ENCODE measurements at regions of chr3 and their contacts with region 1.

Region 1: GRCh38 chr3:14431892-14432834 is 29.8 kb downstream of the SLC6A6 start:
- DNase-seq: peak; percentile 84 to 98 (median 94)
- ATAC-seq: peak; percentile 84
- H3K4me3 ChIP-seq: peak overlapping the region; percentile 31
- H3K4me3 Mint-ChIP-seq: peak overlapping the region; percentile 60
- H3K27ac ChIP-seq: peak overlapping the region; percentile 92 to 97
- H3K27ac Mint-ChIP-seq: peak overlapping the region; percentile 98
- H3K4me1 ChIP-seq: peaks cover 93% of the 10 kb centered on the region
- H3K4me1 Mint-ChIP-seq: peaks cover 92% of the 10 kb centered on the region
- H3K27me3 ChIP-seq: no peaks in the 10 kb centered on the region
- H3K27me3 Mint-ChIP-seq: no peaks in the 10 kb centered on the region
- CTCF ChIP-seq: no peak

Region 2: GRCh38 chr3:12484198-12484974 is 1947.8 kb before region 1 on chr3 and contains the start of gene TSEN2:
- CTCF ChIA-PET with region 1: no interaction called
- POLR2A ChIA-PET with region 1: no interaction called
- intact Hi-C with region 1: loop called in 1 of 2 experiments (anchors 10 kb)
- DNase-seq: peak; percentile 92 to 99 (median 96)
- ATAC-seq: peak; percentile 96
- H3K4me3 ChIP-seq: peak within 1 kb of the TSS; percentile 87
- H3K4me3 Mint-ChIP-seq: peak within 1 kb of the TSS; percentile 97
- H3K27ac ChIP-seq: peak within 1 kb of the TSS; percentile 72 to 81
- H3K27ac Mint-ChIP-seq: peak within 1 kb of the TSS; percentile 97
- H3K4me1 ChIP-seq: peaks cover 29% of the 10 kb centered on the region
- H3K4me1 Mint-ChIP-seq: peaks cover 52% of the 10 kb centered on the region
- H3K27me3 ChIP-seq: no peaks in the 10 kb centered on the region
- H3K27me3 Mint-ChIP-seq: no peaks in the 10 kb centered on the region
- CTCF ChIP-seq: no peak
- total RNA-seq, gene TSEN2: 8.0 to 8.2 TPM

Region 3: DNA sequence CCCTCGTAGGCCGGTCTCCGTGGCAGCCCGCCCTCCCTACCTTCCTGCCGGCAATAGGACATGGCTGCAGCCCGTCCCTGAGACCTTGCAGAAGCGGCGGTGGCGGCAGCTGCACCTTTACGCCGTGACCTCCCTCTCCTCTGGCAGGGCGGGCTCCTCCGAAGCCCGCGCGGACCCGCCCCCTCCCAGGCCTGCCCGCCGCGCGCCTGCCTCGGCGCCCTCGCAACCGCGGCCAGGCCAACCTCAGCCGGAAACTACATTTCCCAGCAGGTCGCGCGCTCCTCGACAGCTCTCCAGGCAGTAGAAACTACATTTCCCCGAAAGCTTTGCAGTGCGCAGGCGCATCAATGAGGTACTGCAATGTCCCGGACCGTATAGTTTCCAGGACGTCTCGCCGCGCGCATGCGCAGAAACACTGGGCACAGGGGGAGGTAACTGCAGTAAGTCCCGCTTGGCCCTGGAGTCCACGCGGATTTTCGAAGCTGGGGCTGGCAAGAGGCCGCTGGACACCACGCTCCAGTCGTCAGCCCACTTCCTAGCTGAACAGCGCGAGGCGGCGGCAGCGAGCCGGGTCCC is 307.5 kb before region 1 on chr3 and contains the starts of genes CHCHD4 and TMEM43:
- CTCF ChIA-PET with region 1: no interaction called
- POLR2A ChIA-PET with region 1: interaction called, 14 read pairs
- intact Hi-C with region 1: no loop called
- DNase-seq: peak; percentile 94 to 100 (median 98)
- ATAC-seq: peak; percentile 89
- H3K4me3 ChIP-seq: peak within 1 kb of the TSS; percentile 96
- H3K4me3 Mint-ChIP-seq: peak within 1 kb of the TSS; percentile 97
- H3K27ac ChIP-seq: peak within 1 kb of the TSS; percentile 76 to 86
- H3K27ac Mint-ChIP-seq: peak within 1 kb of the TSS; percentile 91
- H3K4me1 ChIP-seq: peaks cover 53% of the 10 kb centered on the region
- H3K4me1 Mint-ChIP-seq: peaks cover 73% of the 10 kb centered on the region
- H3K27me3 ChIP-seq: no peaks in the 10 kb centered on the region
- H3K27me3 Mint-ChIP-seq: no peaks in the 10 kb centered on the region
- CTCF ChIP-seq: no peak
- total RNA-seq, gene CHCHD4: 0.50 to 1.1 TPM
- total RNA-seq, gene TMEM43: 24.8 to 27.6 TPM

Region 4: GRCh38 chr3:14461748-14462324 is 29.7 kb after region 1 on chr3:
- CTCF ChIA-PET with region 1: no interaction called
- POLR2A ChIA-PET with region 1: interaction called, 5 read pairs
- intact Hi-C with region 1: loop called (anchors 2 to 5 kb)
- DNase-seq: peak; percentile 14 to 72 (median 45)
- ATAC-seq: peak; percentile 49
- H3K4me3 ChIP-seq: no peak overlapping the region
- H3K4me3 Mint-ChIP-seq: no peak overlapping the region
- H3K27ac ChIP-seq: no peak overlapping the region
- H3K27ac Mint-ChIP-seq: no peak overlapping the region
- H3K4me1 ChIP-seq: no peaks in the 10 kb centered on the region
- H3K4me1 Mint-ChIP-seq: no peaks in the 10 kb centered on the region
- H3K27me3 ChIP-seq: no peaks in the 10 kb centered on the region
- H3K27me3 Mint-ChIP-seq: no peaks in the 10 kb centered on the region
- CTCF ChIP-seq: peak; percentile 41

Region 5: DNA sequence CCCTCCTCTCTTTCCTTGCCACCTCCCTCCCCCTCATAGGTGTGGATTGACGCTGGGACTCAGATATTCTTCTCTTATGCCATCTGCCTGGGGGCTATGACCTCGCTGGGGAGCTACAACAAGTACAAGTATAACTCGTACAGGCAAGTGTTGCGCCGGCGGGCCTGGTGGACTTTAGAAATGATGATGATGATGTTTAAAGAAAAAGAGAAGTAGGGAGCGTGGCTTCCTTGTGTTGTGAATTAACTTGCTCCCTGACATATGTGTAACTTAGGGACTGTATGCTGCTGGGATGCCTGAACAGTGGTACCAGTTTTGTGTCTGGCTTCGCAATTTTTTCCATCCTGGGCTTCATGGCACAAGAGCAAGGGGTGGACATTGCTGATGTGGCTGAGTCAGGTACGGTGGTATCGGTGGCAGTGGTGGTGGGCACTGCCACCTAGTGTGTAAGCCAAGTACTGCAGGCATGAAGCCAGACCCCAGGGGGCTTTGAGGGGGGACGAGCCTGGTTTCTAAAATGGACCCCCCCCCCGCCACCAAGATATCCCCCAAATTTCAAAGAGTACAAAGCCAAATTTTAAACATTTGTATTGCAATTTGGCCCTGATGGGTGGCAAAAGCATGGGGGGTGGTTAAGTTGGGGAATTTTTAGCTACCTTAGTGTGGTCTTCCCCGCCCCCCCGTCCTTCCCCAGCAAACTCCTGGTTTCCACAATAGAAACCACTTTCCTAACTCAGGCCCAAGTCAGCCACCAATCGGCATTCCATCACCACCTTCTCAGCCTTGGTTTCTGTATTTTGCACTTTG is 35.9 kb after region 1 on chr3:
- CTCF ChIA-PET with region 1: interaction called, 4 read pairs
- POLR2A ChIA-PET with region 1: no interaction called
- intact Hi-C with region 1: loop called in 1 of 2 experiments (anchors 5 kb)
- DNase-seq: peak; percentile 24 to 72 (median 40)
- ATAC-seq: peak; percentile 79
- H3K4me3 ChIP-seq: no peak overlapping the region
- H3K4me3 Mint-ChIP-seq: no peak overlapping the region
- H3K27ac ChIP-seq: no peak overlapping the region
- H3K27ac Mint-ChIP-seq: no peak overlapping the region
- H3K4me1 ChIP-seq: no peaks in the 10 kb centered on the region
- H3K4me1 Mint-ChIP-seq: no peaks in the 10 kb centered on the region
- H3K27me3 ChIP-seq: no peaks in the 10 kb centered on the region
- H3K27me3 Mint-ChIP-seq: no peaks in the 10 kb centered on the region
- CTCF ChIP-seq: peak; percentile 89

Measured in CD4-positive, alpha-beta T cell (primary cell).